ENCODE measurements at regions of chr19 and their contacts with region 1.

Region 1: GRCh38 chr19:11528551-11529341 is at the start of gene ECSIT:
- DNase-seq: peak; percentile 99
- H3K4me3 ChIP-seq: peak within 1 kb of the TSS; percentile 52 to 98 (median 90)
- H3K27ac ChIP-seq: peak within 1 kb of the TSS; percentile 82
- H3K4me1 ChIP-seq: peaks cover 8% of the 10 kb centered on the region
- H3K27me3 ChIP-seq: no peaks in the 10 kb centered on the region
- CTCF ChIP-seq: no peak
- POLR2A ChIP-seq: no peak
- total RNA-seq, gene ECSIT: 32.4 and 36.7 TPM in 2 replicates

Region 2: GRCh38 chr19:11505032-11505503 is 23.7 kb before region 1 on chr19:
- CTCF ChIA-PET with region 1: no interaction called
- POLR2A ChIA-PET with region 1: no interaction called
- dilution Hi-C with region 1: no loop called
- intact Hi-C with region 1: loop called (anchors 1 kb)
- DNase-seq: peak; percentile 98
- H3K4me3 ChIP-seq: peak overlapping the region; percentile 44 to 71 (median 71)
- H3K27ac ChIP-seq: peak overlapping the region; percentile 81
- H3K4me1 ChIP-seq: peaks cover 10% of the 10 kb centered on the region
- H3K27me3 ChIP-seq: no peaks in the 10 kb centered on the region
- CTCF ChIP-seq: no peak
- POLR2A ChIP-seq: no peak

Measured in endothelial cell of umbilical vein (primary cell).